ENCODE measurements at regions of chr12 and their contacts with region 1.

Region 1: GRCh38 chr12:53005986-53006809 is at the start of gene EIF4B:
- DNase-seq: peak; percentile 99
- H3K4me3 Mint-ChIP-seq: peak within 1 kb of the TSS; percentile 98
- H3K27ac Mint-ChIP-seq: peak within 1 kb of the TSS; percentile 98
- H3K4me1 Mint-ChIP-seq: peaks cover 31% of the 10 kb centered on the region
- H3K27me3 Mint-ChIP-seq: no peaks in the 10 kb centered on the region
- CTCF ChIP-seq: no peak
- total RNA-seq, gene EIF4B: 580 and 658 TPM in 2 replicates

Region 2: GRCh38 chr12:52522346-52523011 is 483.7 kb before region 1 on chr12:
- CTCF ChIA-PET with region 1: interaction called, 4 read pairs
- POLR2A ChIA-PET with region 1: interaction called, 30 read pairs
- intact Hi-C with region 1: no loop called
- DNase-seq: peak; percentile 98
- H3K4me3 Mint-ChIP-seq: peak overlapping the region; percentile 80
- H3K27ac Mint-ChIP-seq: peak overlapping the region; percentile 96
- H3K4me1 Mint-ChIP-seq: peaks cover 44% of the 10 kb centered on the region
- H3K27me3 Mint-ChIP-seq: no peaks in the 10 kb centered on the region
- CTCF ChIP-seq: no peak

Region 3: DNA sequence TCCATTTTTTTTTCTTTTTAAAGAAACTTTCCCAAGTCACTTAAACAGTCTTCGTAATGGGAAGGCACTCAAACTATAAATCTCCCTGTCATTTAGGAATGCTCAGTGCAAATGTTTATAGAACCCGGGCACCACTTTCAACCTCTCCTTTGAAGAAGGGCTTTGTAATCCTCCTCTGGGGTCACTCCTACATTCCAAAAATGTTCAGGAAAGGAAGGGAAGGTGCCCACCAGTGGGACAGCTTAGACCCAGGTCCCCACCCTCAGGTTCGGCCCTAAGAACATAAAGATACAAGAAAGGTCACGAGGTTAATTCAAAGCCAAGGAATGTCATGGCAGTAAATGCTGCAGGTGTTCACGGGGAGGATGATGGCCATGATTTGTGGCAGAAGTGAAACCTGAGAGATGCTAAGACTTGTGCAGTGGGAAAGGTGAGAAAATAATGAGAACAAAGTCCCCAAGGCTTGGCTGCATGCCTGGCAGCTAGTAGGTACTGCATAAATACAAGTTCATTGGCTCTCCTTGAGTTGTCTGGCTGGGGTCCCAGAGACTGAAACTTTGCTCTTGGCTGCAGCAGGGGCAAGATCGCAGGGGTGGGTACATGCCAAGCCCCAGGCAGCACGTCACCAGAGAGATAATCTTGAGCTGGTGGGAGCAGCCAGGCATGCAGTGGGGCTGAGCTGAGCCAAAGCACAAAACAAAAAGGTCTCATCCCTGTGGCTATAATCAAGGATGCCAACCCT is 36.2 kb before region 1 on chr12:
- CTCF ChIA-PET with region 1: no interaction called
- POLR2A ChIA-PET with region 1: interaction called, 14 read pairs
- intact Hi-C with region 1: no loop called
- DNase-seq: peak; percentile 60
- H3K4me3 Mint-ChIP-seq: no peak overlapping the region
- H3K27ac Mint-ChIP-seq: peak overlapping the region; percentile 39
- H3K4me1 Mint-ChIP-seq: peaks cover 23% of the 10 kb centered on the region
- H3K27me3 Mint-ChIP-seq: no peaks in the 10 kb centered on the region
- CTCF ChIP-seq: no peak

Region 4: DNA sequence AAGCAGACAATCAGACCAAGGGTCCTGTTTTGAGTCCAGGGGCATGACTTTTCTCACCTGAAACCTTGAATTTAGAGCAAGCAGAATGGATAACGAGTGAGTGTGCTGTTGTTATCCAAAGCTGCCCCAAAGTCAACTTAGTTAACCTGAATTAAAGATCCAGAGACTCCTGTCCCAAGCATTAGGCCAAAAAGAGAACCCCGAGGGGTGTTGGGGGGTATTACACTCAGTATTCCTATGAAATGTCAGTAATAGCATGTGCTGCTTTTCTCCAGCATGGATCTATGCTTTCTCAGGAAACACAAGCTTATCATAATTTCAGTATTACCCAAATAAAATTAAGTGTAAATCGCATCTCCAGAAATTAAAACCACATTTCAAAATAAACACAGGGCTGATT is 19.1 kb after region 1 on chr12:
- CTCF ChIA-PET with region 1: interaction called, 3 read pairs
- POLR2A ChIA-PET with region 1: interaction called, 10 read pairs
- intact Hi-C with region 1: no loop called
- DNase-seq: no peak
- H3K4me3 Mint-ChIP-seq: no peak overlapping the region
- H3K27ac Mint-ChIP-seq: no peak overlapping the region
- H3K4me1 Mint-ChIP-seq: peaks cover 3% of the 10 kb centered on the region
- H3K27me3 Mint-ChIP-seq: no peaks in the 10 kb centered on the region
- CTCF ChIP-seq: no peak

Region 5: DNA sequence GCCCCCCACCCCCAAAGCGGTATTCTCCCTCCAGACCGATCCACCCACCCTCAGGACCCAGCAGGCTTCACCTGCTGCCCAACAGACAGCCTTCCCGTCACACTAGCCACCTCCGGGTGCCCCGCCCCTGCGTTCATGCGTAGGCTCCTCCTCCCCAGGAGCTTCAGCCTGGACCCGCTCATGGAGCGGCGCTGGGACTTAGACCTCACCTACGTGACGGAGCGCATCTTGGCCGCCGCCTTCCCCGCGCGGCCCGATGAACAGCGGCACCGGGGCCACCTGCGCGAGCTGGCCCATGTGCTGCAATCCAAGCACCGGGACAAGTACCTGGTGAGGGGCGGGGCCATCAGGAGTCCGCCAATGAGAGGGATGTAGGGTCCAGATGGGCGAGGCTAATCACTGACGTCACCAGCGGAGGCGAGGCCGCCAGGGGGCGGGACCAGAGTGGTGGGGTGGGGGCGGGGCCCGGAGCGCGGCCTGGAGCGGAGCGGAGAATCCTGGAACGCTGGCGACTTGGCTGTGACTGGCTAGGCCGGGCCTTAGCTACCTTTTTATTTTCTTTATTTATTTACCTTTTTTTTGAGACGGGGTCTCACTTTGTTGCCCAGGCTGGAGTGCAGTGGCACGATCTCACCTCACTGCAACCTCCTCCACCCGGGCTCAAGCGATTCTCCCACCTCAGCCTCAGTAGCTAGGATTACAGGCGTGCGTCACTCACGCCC is 48.1 kb after region 1 on chr12:
- CTCF ChIA-PET with region 1: interaction called, 4 read pairs
- POLR2A ChIA-PET with region 1: interaction called, 34 read pairs
- intact Hi-C with region 1: no loop called
- DNase-seq: peak; percentile 98
- H3K4me3 Mint-ChIP-seq: peak overlapping the region; percentile 80
- H3K27ac Mint-ChIP-seq: peak overlapping the region; percentile 97
- H3K4me1 Mint-ChIP-seq: peaks cover 32% of the 10 kb centered on the region
- H3K27me3 Mint-ChIP-seq: no peaks in the 10 kb centered on the region
- CTCF ChIP-seq: no peak

Region 6: DNA sequence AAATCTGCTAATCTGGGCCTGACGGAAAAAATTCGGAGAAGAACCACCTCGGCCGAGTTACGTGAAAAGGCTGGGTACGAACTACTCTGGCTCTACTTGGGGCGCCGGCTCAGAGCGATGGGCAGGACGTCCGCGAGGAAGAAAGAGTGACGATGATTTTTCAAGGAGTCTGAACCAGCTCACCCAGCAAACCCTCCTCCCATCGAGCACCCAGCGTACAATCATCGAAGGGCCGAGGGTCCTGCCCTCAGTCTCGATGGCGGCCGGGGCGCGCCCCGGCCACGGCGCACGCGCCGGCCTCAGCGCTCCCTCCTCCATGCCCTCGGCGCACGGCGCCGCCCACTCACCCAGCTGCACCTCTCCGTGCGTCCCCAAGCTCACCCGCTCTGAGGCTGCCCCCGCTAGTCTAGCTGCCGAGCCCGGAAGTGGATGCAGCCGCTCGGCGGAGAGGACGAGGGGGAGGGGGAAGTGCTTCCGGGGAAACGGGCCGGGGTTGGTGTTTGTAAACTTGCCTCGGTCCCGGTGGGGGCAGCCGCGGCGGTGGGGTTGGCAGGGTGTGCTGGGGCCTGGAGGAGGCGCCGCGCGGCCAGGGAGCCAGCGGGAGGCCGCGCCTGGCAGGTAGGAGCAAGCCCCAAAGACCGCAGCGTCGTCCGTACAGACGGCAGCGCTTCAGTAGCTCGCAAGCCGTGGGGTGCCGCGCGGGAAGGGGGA is 174.2 kb after region 1 on chr12 and contains the starts of genes CSAD and ZNF740:
- CTCF ChIA-PET with region 1: no interaction called
- POLR2A ChIA-PET with region 1: interaction called, 13 read pairs
- intact Hi-C with region 1: no loop called
- DNase-seq: peak; percentile 96
- H3K4me3 Mint-ChIP-seq: peak within 1 kb of the TSS; percentile 95
- H3K27ac Mint-ChIP-seq: peak within 1 kb of the TSS; percentile 94
- H3K4me1 Mint-ChIP-seq: peaks cover 29% of the 10 kb centered on the region
- H3K27me3 Mint-ChIP-seq: no peaks in the 10 kb centered on the region
- CTCF ChIP-seq: no peak
- total RNA-seq, gene CSAD: 22.7 and 30.8 TPM in 2 replicates
- total RNA-seq, gene ZNF740: 34.9 and 36.2 TPM in 2 replicates

Measured in MCF 10A (cell line).